Endothelial cell of umbilical vein (primary cell): ENCODE measurements at regions of chr9 and their contacts with region 1.

Region 1: GRCh38 chr9:2469681-2470221 is 151.8 kb upstream of the VLDLR start:
- DNase-seq: peak; percentile 68
- H3K4me3 ChIP-seq: no peak overlapping the region
- H3K27ac ChIP-seq: no peak overlapping the region
- H3K4me1 ChIP-seq: peaks cover 4% of the 10 kb centered on the region
- H3K27me3 ChIP-seq: no peaks in the 10 kb centered on the region
- CTCF ChIP-seq: no peak
- POLR2A ChIP-seq: no peak

Region 2: DNA sequence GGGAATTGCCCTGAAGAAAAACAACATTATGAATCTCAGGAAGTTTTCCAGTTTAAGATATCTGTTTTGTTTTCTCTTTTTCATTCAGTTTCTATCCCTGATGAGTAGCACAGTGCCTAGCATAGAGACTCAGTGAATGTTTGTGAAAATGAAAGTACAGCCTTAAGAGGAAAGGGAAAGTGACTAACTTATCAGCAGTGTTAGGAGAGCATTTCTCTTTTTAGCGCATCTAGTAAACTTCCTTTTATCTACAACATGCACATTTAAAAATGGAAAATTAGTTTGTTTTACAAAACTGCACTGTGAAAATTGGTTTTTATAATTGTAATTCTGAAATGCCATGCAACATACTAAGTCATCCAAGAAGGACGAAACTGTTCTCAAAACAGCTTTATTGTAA is 343.8 kb before region 1 on chr9:
- CTCF ChIA-PET with region 1: no interaction called
- POLR2A ChIA-PET with region 1: no interaction called
- dilution Hi-C with region 1: no loop called
- intact Hi-C with region 1: loop called (anchors 5 kb)
- DNase-seq: peak; percentile 52
- H3K4me3 ChIP-seq: peak overlapping the region in 1 of 3 experiments; percentile 48
- H3K27ac ChIP-seq: peak overlapping the region; percentile 34
- H3K4me1 ChIP-seq: peaks cover 41% of the 10 kb centered on the region
- H3K27me3 ChIP-seq: no peaks in the 10 kb centered on the region
- CTCF ChIP-seq: no peak
- POLR2A ChIP-seq: no peak

Region 3: GRCh38 chr9:2570615-2571479 is 101.1 kb after region 1 on chr9:
- CTCF ChIA-PET with region 1: no interaction called
- POLR2A ChIA-PET with region 1: no interaction called
- dilution Hi-C with region 1: no loop called
- intact Hi-C with region 1: loop called (anchors 5 kb)
- DNase-seq: peak; percentile 21
- H3K4me3 ChIP-seq: no peak overlapping the region
- H3K27ac ChIP-seq: no peak overlapping the region
- H3K4me1 ChIP-seq: no peaks in the 10 kb centered on the region
- H3K27me3 ChIP-seq: no peaks in the 10 kb centered on the region
- CTCF ChIP-seq: no peak
- POLR2A ChIP-seq: no peak

Region 4: DNA sequence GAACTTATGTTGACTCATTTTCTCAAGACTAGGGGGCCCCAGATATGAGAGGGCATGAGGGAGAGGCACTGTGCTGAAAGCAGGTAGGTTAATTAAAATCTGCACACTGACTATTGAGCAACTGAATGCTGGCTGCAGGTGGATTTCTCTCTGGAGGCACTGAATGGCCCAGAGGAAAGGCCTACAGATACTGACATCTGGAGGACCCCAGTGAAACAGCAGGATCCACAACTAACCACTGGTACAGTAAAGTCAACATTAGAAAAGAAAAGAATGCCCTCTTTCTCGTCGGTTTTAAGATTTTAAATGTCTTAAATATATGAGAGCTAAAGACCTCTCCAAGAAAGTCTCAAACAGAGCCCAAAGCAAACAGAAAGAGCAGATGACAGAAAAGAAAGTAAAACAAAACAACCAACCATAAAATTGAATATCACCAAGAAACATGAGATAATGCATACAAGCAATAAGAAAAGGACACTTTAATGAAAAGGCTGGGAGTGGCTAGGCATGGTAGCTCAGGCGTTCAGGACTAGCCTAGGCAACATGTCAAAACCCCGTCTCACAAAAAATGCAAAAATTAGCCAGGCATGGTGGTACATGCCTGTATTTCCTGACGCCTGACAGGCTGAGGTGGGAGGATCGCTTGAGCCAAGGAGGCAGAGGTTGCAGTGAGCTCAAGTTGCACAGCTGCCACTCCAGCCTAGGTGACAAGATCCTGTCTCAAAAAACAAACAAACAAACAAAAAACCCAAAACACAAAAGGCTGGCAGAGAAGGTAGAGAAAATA is 330.8 kb after region 1 on chr9:
- CTCF ChIA-PET with region 1: no interaction called
- POLR2A ChIA-PET with region 1: no interaction called
- dilution Hi-C with region 1: no loop called
- intact Hi-C with region 1: no loop called
- DNase-seq: no peak
- H3K4me3 ChIP-seq: no peak overlapping the region
- H3K27ac ChIP-seq: no peak overlapping the region
- H3K4me1 ChIP-seq: no peaks in the 10 kb centered on the region
- H3K27me3 ChIP-seq: no peaks in the 10 kb centered on the region
- CTCF ChIP-seq: peak in 1 of 2 donors; percentile 17
- POLR2A ChIP-seq: no peak